PC-9 (cell line): ENCODE measurements at regions of chr3 and their contacts with region 1.

Region 1: DNA sequence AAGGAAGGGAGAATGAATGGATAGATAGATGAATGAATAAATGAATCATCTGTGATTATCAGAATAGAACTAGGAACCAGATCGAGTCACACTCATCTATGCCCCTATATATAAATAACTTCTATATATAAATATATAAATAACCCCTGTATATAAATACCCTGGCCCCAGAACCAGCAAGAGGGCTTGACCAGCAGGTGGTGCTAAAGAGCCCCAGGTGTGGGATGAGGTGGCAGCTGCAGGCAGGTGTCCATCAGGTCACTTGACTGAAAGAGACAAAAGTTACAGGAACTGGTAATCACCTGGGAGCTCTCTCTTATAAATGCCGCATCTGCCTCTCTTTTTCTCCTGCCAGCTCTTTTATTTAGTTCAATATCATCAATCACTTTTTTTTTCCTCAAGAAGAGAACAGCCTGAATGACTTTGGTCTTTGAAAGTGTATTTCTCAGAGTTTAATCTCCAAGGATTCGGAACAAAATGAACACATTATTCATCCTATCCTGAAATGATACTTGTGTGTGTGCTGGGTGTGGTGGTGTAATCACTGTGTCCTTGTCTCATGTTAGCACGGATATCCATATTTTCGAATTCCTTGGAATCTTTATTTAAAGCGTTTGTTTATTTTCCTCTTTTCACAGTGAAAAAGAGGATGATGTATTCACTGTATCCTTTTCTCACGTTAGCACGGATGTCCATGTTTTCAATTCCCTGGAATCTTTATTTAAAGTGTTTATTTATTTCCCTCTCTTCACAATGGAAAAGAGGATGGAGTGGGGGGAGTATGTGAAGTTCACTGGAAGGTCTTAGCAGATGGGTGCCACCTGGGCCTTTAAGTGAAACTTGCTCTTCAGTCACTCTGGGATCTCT is 35.4 kb upstream of the ATG7 start:
- DNase-seq: peak; percentile 59 to 88
- H3K4me3 ChIP-seq: peak overlapping the region; percentile 33; the same call in 1 of the 2 replicates
- H3K27ac ChIP-seq: peak overlapping the region; percentile 99
- H3K4me1 ChIP-seq: peaks cover 41% of the 10 kb centered on the region
- H3K27me3 ChIP-seq: no peaks in the 10 kb centered on the region
- CTCF ChIP-seq: peak; percentile 93

Region 2: DNA sequence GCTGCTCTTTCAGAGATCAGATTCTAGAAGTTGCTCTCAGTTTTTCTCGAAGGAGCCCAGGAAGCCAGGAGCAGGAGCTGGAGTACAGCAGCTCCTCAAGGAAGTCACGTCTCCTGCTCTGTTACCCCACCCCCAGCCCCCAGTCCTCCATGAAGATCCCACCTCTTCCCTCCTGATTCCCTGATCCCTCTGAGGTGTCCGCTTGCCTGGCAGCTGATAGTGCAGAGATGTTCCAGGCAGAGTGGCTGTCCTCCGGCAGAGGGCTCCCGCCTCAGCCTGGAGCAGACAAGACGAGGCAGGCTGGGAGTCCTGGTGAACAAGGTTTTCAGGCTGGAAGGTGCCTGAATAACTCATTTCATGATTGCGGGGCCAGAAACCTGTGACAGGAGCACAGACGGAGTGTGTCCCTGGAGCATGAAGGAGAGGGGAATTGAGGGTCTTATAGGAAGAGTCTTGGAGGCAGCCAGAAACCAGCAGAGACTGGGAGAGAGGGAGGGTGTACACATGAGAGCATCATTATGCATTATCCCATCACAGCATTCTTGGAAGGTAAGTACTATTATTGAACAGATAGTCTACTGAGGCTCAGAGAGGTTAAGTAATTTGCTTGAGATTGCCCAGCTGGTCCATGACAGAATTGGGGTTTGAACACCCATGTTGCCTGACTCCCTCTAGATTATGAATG is 81.3 kb before region 1 on chr3:
- CTCF ChIA-PET with region 1: no interaction called
- POLR2A ChIA-PET with region 1: no interaction called
- intact Hi-C with region 1: loop called (anchors 1 kb)
- DNase-seq: peak; percentile 62 to 74
- H3K4me3 ChIP-seq: peak overlapping the region; percentile 68
- H3K27ac ChIP-seq: no peak overlapping the region
- H3K4me1 ChIP-seq: peaks cover 12% of the 10 kb centered on the region; the same call in 1 of the 2 replicates
- H3K27me3 ChIP-seq: no peaks in the 10 kb centered on the region
- CTCF ChIP-seq: peak; percentile 76

Region 3: GRCh38 chr3:11271986-11272904 is 35.4 kb after region 1 on chr3 and contains the start of gene ATG7:
- CTCF ChIA-PET with region 1: interaction called, 4 read pairs
- POLR2A ChIA-PET with region 1: interaction called, 11 read pairs
- intact Hi-C with region 1: loop called (anchors 2 kb)
- DNase-seq: peak; percentile 86 to 95
- H3K4me3 ChIP-seq: peak within 1 kb of the TSS; percentile 98
- H3K27ac ChIP-seq: peak within 1 kb of the TSS; percentile 58
- H3K4me1 ChIP-seq: peaks cover 16% of the 10 kb centered on the region
- H3K27me3 ChIP-seq: no peaks in the 10 kb centered on the region
- CTCF ChIP-seq: no peak
- total RNA-seq, gene ATG7: 53.1 and 56.1 TPM in 2 replicates

Region 4: DNA sequence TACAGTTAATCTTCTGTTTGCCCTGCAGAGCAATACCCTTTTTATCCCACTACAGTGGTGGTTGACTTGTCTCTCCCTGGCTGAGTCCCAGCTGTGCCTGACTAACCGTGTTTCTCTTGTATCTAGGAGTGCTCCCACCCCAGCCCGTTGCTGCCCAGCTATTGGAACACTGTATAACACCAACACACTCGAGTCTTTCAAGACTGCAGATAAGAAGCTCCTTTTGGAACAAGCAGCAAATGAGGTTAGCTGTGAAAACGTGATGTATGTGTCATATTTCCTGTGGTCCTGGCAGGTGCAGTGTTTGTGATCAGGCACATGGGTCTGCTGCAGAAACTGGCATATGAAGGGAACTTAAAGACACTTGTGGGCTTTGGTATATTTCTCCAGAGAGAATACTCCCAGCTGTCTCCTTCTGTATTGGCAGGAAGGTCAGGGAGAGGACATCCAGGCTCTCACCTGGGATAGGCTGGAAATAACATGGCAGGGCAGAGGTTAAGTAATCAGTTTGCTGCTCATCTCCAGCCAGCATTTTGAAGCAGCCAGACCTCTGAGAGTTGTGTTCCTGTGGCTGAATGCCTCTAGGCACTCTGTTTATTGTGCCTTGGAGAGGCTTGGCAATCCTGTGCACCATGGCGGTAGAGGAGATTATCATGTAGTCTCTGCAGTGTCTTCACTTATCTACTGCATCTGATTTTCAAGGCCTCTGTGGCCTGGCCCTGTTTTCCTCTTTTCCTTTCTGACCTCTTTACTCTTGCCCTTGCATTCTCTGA is 70.2 kb after region 1 on chr3:
- CTCF ChIA-PET with region 1: interaction called, 3 read pairs
- POLR2A ChIA-PET with region 1: interaction called, 4 read pairs
- intact Hi-C with region 1: loop called (anchors 5 kb)
- DNase-seq: no peak
- H3K4me3 ChIP-seq: no peak overlapping the region
- H3K27ac ChIP-seq: no peak overlapping the region
- H3K4me1 ChIP-seq: peaks cover 15% of the 10 kb centered on the region
- H3K27me3 ChIP-seq: no peaks in the 10 kb centered on the region
- CTCF ChIP-seq: no peak

Region 5: DNA sequence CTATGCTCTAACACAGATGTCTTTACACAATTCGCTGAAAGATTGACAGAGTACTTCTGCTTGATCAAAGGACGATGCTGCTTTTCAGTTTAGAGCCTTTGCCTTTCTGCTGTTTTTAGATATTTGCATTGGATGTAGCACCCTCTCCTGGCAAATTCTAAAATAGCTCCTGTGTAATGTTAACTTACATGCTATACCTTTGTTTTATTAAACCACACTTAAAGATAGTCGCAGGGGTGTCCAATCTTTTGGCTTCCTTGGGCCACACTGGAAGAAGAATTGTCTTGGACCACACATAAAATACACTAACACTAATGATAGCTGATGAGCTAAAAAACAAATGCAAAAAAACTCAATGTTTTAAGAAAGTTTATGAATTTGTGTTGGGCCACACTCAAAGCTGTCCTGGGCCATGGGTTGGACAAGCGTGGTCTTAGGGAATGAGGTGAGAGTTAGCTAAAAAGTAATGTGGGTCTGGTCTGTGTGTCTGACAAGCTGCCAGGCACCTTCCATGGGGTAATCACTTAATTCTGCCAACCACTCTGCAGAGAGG is 98.3 kb after region 1 on chr3:
- CTCF ChIA-PET with region 1: interaction called, 14 read pairs
- POLR2A ChIA-PET with region 1: interaction called, 3 read pairs
- intact Hi-C with region 1: loop called (anchors 1 kb)
- DNase-seq: peak; percentile 31 to 52
- H3K4me3 ChIP-seq: no peak overlapping the region
- H3K27ac ChIP-seq: no peak overlapping the region
- H3K4me1 ChIP-seq: peaks cover 8% of the 10 kb centered on the region
- H3K27me3 ChIP-seq: no peaks in the 10 kb centered on the region
- CTCF ChIP-seq: peak; percentile 83